Prostate gland (tissue), 2 donors: ENCODE measurements at regions of chr11 and their contacts with region 1.

Region 1: GRCh38 chr11:75562048-75562835 is at the start of gene SERPINH1:
- DNase-seq: peak; percentile 79
- H3K4me3 ChIP-seq: peak within 1 kb of the TSS; percentile 84 to 89
- H3K27ac ChIP-seq: peak within 1 kb of the TSS; percentile 98 to 99
- H3K4me1 ChIP-seq: peaks cover 35% of the 10 kb centered on the region
- H3K27me3 ChIP-seq: no peaks in the 10 kb centered on the region
- CTCF ChIP-seq: no peak
- POLR2A ChIP-seq: peak; percentile 74
- total RNA-seq, gene SERPINH1: 123 to 189 TPM

Region 2: DNA sequence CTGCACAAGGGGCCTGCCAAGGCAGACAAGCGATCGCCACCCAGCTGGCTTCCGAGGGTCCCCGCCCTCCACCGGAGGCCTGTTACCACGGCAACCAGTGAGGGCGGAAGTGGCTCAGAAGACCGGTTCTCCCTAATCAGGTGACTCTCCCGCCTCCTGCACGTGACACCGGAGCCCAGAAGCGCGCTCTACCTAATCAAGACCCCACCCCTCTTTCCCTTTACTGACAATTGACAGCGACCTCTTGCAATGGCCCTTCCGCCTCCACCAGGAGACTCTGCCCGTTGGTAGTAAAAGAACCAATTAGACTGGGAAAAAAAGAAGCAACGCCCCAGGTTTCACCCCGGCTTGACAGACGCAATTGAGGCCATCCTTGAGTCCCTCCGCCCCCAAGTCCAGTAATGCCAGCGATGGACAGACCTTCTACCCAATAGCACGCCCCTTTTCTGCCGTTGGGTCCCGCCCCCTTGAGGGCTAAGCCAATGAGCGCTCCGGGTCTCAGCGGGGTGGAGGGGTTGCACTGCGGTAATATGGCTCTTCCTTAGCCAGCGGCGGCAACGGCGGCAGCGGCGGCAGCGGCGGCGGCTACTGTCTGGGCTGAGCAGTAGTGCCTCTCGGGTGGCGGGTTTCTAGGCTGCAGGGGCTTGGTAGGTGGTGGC is 252.6 kb after region 1 on chr11 and contains the start of gene UVRAG:
- intact Hi-C with region 1: loop called (anchors 5 kb)
- DNase-seq: peak; percentile 99
- H3K4me3 ChIP-seq: peak within 1 kb of the TSS; percentile 74 to 100
- H3K27ac ChIP-seq: peak within 1 kb of the TSS; percentile 85 to 92
- H3K4me1 ChIP-seq: peaks cover 10% of the 10 kb centered on the region
- H3K27me3 ChIP-seq: no peaks in the 10 kb centered on the region
- CTCF ChIP-seq: peak in 3 of 4 experiments; percentile 11 to 61 (median 44)
- POLR2A ChIP-seq: peak; percentile 94
- total RNA-seq, gene UVRAG: 13.9 to 25.2 TPM